Activated CD4-positive, alpha-beta T cell treated with anti-CD3 and anti-CD28 coated beads for 36 hours (primary cell): ENCODE measurements at regions of chr19 and their contacts with region 1.

Region 1: DNA sequence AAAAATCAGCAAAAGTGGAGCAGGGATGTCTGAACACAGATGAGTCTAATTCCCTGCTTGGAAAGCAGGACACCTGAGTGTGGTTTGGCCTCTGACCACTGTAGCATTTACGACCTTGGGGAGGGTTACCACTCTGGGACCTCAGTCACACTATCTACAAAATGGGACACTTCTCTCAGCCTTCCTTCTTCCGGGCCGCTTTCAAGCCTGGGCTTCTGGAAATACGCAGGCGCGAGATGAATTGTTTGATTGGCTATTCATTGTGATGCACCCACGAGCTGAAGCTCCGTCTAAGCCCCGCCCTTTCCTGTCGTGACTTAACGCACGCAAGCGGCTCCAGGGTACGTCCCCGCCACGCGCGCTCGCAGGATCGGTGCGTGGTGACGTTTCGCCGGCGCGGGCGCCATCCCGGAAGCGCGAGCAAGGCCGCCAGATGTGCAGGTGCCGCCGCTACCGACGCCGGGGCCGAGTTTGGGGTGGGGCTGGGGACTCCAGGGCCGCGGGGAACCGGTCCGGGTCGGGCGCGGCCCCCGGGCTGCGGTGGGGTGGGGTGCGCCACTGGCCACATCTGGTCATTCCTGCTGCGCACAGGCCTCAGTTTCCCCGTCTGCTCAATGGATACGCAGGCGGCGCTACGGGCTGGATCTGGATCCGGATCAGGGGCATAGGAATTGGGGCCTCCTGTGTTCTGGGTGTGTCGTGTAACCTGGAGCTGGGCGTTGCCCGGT is at the start of gene KXD1:
- DNase-seq: peak; percentile 99
- ATAC-seq: peak; percentile 99
- H3K4me3 Mint-ChIP-seq: peak within 1 kb of the TSS; percentile 91
- H3K27ac Mint-ChIP-seq: peak within 1 kb of the TSS; percentile 95
- H3K4me1 Mint-ChIP-seq: peaks cover 20% of the 10 kb centered on the region
- H3K27me3 Mint-ChIP-seq: no peaks in the 10 kb centered on the region
- total RNA-seq, gene KXD1: 121 to 170 TPM

Region 2: GRCh38 chr19:18496167-18496979 is 61.3 kb before region 1 on chr19:
- CTCF ChIA-PET with region 1: no interaction called
- POLR2A ChIA-PET with region 1: no interaction called
- intact Hi-C with region 1: no loop called
- DNase-seq: peak; percentile 79
- ATAC-seq: peak; percentile 96
- H3K4me3 Mint-ChIP-seq: peak overlapping the region; percentile 45
- H3K27ac Mint-ChIP-seq: peak overlapping the region; percentile 88
- H3K4me1 Mint-ChIP-seq: peaks cover 77% of the 10 kb centered on the region
- H3K27me3 Mint-ChIP-seq: no peaks in the 10 kb centered on the region

Region 3: DNA sequence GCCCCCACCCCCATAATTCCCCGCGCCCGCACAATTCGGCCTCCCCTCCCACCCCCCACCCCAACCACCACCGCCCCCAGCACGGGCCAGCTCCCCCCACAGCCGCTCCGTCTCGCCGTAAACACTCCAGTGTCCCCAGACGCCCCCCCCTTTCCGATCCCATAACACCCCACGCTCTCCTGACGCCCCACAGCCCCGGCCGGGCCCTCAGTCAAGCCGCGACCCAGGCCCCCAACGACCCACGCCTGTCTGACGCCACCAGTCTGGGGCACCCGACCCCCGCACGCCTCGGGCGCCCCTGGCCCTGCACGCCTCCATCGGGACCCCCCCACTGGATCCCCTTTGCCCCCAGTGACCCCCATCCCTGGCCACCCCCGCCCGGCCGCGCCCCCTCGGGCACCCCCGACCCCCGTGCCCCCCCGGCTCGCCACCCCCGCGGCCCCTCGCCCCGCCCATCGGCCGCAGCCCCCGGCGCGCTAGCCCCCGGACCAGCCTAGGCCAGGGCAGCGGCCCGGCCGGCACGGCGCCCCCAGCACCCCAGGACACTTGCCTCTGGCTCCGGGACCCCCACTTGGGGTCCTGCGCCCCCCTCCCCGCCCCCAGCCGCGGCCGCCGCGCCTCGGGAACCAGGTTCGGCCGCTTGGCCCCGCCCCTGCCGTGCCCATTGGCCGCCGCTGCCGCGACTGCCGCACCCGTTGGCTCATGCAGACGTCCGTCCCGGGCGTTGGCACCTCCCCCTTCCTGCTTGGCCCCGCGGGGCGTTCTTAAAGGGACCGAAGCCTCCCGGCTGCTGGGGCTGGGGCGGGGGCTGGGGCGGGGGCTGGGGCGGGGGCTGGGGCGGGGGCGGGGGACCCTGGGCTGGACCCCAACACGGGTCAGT is 14.5 kb before region 1 on chr19 and contains the start of gene FKBP8:
- CTCF ChIA-PET with region 1: interaction called, 22 read pairs
- POLR2A ChIA-PET with region 1: interaction called, 6 read pairs
- intact Hi-C with region 1: loop called (anchors 1 kb)
- DNase-seq: peak; percentile 98
- ATAC-seq: peak; percentile 92
- H3K4me3 Mint-ChIP-seq: peak within 1 kb of the TSS; percentile 92
- H3K27ac Mint-ChIP-seq: peak within 1 kb of the TSS; percentile 98
- H3K4me1 Mint-ChIP-seq: peaks cover 25% of the 10 kb centered on the region
- H3K27me3 Mint-ChIP-seq: no peaks in the 10 kb centered on the region
- total RNA-seq, gene FKBP8: 208 to 211 TPM